ENCODE measurements at regions of chr1 and their contacts with region 1.

Region 1: DNA sequence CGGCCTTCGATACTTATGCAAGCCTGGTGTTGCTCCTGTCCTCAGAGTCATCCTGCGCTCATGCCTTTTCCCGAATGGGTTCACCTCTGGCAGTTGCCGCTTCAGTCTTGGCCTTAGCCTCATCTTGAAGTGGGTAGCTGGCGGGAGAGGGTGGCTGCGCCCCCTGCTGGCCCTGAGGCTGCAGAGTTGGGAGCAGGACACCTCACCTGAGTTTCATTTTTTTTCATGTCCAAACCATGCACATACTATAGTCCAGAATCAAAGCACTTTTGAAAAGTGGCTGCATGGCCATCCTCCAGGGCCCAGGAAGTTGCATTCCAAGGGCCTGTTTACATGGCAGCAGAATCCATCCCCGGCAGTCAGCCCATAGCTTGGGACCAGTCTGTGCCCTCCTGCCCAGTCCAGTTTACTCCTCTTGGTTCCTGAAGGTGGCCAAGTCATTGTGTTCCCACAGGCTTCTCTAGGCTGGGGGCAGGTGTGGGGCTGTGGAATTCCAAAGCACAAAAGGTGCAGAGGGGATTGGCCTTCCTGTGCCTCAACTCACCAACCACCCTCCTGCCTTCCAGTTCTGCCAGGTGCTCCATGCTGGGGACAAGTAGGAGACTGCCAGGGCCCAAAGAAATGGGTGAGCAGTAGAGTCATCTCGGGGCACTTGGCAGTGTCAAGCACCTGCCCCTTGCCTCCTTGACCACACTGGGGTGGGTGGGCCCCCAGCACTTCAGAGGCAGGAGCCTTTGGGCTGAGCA is 44.0 kb downstream of the YARS1 start:
- DNase-seq: peak; percentile 58
- H3K4me3 Mint-ChIP-seq: no peak overlapping the region
- H3K27ac Mint-ChIP-seq: peak overlapping the region; percentile 42
- H3K4me1 Mint-ChIP-seq: peaks cover 26% of the 10 kb centered on the region
- H3K27me3 Mint-ChIP-seq: no peaks in the 10 kb centered on the region

Region 2: DNA sequence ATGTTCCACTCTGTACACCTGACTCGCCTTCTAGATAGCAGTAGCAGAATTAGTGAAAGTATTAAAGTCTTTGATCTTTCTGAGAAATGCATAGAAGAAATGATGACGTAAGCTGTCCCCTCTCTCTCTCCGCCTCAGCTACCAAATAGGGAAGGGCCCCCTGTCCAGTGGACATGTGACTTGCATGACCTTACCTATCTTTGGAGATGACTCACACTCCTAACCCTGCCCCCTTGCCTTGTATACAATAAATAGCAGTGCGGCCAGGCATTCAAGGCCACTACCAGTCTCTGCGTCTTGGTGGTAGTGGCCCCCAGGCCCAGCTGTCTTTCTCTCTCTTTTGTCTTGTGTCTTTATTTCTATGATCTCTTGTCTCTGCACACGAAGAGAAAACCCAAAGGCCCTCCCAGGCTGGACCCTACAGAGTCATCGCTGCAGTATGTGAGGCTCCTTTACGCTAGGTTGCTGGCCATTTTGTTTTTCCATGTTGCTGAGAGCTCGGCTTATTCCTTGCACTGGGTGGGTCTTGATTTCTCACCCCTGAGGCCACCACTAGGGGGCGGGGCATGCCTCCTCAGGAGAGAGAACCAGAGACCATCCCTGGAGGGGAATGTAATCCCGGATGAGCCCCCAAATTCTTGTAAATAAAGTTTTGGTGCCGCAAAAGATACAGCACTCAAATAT is 324.3 kb before region 1 on chr1:
- intact Hi-C with region 1: loop called (anchors 5 kb)
- DNase-seq: no peak
- H3K4me3 Mint-ChIP-seq: no peak overlapping the region
- H3K27ac Mint-ChIP-seq: no peak overlapping the region
- H3K4me1 Mint-ChIP-seq: no peaks in the 10 kb centered on the region
- H3K27me3 Mint-ChIP-seq: peaks cover 21% of the 10 kb centered on the region

Region 3: DNA sequence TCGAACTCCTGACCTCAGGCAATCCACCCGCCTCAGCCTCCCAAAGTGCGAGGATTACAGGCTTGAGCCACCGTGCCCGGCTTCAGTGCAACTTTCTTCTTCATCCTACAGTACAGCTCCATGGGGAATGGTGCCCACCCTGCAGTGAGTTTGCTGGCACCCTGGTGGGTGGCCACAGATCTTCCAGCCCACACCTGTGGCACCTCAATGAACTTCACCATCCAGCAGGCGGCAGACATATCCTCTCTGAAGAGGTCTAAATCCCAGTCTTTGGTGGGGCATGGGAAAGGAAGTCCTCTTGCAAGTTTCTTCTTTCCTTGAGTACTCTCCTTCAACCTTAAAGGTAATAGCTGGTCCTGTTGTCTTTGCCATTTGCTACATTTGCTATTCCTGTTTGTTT is 252.0 kb before region 1 on chr1:
- intact Hi-C with region 1: loop called (anchors 1 kb)
- DNase-seq: no peak
- H3K4me3 Mint-ChIP-seq: peak overlapping the region; percentile 50
- H3K27ac Mint-ChIP-seq: peak overlapping the region; percentile 20
- H3K4me1 Mint-ChIP-seq: peaks cover 5% of the 10 kb centered on the region
- H3K27me3 Mint-ChIP-seq: peaks cover 7% of the 10 kb centered on the region

Region 4: DNA sequence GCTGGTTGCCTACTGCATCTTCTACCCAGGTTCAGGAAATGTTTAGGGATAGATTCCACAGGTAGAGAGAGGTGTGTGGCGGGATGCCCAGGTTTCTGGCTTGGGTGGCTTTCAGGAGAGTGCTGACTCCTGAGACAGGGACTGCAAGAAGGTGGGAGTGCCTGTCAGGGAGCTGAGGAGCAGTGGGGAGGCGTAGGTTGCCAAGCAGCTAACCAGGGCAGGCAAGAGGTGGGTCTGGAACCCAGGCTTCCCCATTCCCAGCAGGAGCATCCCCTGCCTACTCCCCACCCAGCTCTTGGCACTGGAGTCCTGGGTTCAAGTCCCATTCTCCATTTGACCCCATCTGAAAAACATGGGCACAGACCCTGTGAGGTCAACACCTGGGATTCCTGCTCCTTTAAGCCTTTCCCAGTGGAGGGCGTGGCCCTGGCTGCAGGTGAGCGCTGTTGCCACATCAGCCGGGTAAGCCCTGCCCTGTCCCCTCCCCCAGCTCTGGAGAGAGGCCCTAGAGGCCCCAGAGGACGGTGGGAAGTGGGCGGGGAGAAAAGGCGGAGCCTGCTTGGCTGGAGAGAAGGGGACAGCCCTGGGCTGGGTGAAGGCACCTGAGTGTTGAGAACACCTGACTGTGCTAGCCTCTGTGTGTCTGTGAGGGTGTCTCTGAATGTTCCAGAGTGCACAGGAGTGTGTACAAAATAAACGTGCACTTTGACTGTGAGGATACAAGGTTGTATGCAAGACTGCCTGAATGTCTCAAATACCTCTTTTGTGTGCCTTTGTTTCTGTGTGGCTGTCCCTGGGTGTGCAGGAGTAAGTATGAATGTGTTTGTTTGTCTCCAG is 56.7 kb before region 1 on chr1:
- intact Hi-C with region 1: loop called (anchors 1 kb)
- DNase-seq: peak; percentile 60
- H3K4me3 Mint-ChIP-seq: no peak overlapping the region
- H3K27ac Mint-ChIP-seq: no peak overlapping the region
- H3K4me1 Mint-ChIP-seq: peaks cover 10% of the 10 kb centered on the region
- H3K27me3 Mint-ChIP-seq: peaks cover 12% of the 10 kb centered on the region

Region 5: GRCh38 chr1:32798679-32799416 is 25.7 kb after region 1 on chr1:
- intact Hi-C with region 1: loop called (anchors 1 kb)
- DNase-seq: peak; percentile 49
- H3K4me3 Mint-ChIP-seq: peak overlapping the region; percentile 68
- H3K27ac Mint-ChIP-seq: peak overlapping the region; percentile 96
- H3K4me1 Mint-ChIP-seq: peaks cover 47% of the 10 kb centered on the region
- H3K27me3 Mint-ChIP-seq: no peaks in the 10 kb centered on the region